ENCODE measurements at regions of chr12 and their contacts with region 1.

Region 1: DNA sequence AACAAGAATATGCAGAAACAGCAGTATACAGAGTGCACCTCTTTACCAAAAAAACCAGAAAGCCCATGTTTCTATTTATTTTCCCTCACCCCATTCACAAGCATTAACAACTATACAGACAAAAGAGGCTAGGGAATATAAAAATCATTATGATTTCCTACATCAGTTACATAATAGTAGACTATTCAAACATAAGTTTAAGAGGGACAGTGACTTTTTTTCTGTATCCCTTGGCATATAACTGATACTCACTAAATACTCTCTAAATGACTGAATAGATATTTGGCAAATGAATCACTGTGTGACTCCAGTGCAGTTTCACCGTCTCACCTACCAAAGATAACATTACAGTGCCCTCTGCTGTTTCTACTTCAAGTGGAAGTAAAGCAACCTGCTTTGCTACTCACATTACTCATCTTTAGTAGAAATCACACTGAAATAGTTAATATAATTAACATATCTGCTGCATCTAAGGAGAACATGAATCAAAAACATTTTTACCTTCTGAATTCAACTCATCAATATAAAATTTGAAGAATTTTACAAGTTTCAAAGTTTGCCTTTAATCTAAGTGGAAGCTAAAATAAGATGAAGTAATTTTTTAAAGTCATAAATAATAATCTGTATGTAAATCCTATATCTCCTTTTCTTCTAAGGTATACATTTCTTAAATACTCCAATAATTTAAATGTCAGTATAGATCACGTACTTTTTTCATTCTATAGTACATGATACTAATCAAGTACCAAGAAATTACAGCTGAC is 103.8 kb downstream of the OSBPL8 start:
- DNase-seq: peak; percentile 56
- CTCF ChIP-seq: peak; percentile 67

Region 2: GRCh38 chr12:76444408-76444984 is 11.3 kb before region 1 on chr12:
- CTCF ChIA-PET with region 1: interaction called, 22 read pairs
- POLR2A ChIA-PET with region 1: no interaction called
- DNase-seq: no peak
- CTCF ChIP-seq: no peak

Region 3: GRCh38 chr12:76470028-76470939 is 14.5 kb after region 1 on chr12:
- CTCF ChIA-PET with region 1: interaction called, 27 read pairs
- POLR2A ChIA-PET with region 1: no interaction called
- DNase-seq: peak; percentile 29
- CTCF ChIP-seq: no peak

Region 4: DNA sequence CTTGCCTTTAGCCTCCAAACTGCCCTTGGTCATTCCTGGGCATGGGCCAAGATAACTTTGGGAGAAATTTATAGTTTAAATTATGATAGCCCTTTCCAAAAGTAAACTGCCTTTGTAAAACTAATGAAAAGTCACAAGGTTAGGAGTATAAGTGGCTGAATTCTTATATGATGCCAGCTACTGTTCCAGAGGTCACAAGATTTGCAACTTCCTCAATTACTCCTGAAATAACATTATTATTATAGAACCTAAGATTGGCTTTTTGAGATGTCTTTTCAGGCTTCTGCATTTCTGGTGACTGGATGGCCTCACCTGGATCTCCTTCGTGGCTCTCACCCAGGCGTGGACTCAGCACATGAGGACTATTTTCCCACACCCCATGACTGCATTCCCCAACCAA is 48.8 kb after region 1 on chr12:
- CTCF ChIA-PET with region 1: no interaction called
- POLR2A ChIA-PET with region 1: no interaction called
- DNase-seq: no peak
- CTCF ChIP-seq: no peak

Measured in GM10248 (cell line).